Activated CD4-positive, alpha-beta memory T cell treated with anti-CD3 and anti-CD28 coated beads for 36 hours (primary cell): ENCODE measurements at regions of chr2 and their contacts with region 1.

Region 1: GRCh38 chr2:217785544-217786045 is 217.2 kb downstream of the TNS1 start:
- DNase-seq: peak; percentile 85
- H3K4me3 Mint-ChIP-seq: no peak overlapping the region
- H3K27ac Mint-ChIP-seq: no peak overlapping the region
- H3K4me1 Mint-ChIP-seq: peaks cover 21% of the 10 kb centered on the region
- H3K27me3 Mint-ChIP-seq: no peaks in the 10 kb centered on the region

Region 2: DNA sequence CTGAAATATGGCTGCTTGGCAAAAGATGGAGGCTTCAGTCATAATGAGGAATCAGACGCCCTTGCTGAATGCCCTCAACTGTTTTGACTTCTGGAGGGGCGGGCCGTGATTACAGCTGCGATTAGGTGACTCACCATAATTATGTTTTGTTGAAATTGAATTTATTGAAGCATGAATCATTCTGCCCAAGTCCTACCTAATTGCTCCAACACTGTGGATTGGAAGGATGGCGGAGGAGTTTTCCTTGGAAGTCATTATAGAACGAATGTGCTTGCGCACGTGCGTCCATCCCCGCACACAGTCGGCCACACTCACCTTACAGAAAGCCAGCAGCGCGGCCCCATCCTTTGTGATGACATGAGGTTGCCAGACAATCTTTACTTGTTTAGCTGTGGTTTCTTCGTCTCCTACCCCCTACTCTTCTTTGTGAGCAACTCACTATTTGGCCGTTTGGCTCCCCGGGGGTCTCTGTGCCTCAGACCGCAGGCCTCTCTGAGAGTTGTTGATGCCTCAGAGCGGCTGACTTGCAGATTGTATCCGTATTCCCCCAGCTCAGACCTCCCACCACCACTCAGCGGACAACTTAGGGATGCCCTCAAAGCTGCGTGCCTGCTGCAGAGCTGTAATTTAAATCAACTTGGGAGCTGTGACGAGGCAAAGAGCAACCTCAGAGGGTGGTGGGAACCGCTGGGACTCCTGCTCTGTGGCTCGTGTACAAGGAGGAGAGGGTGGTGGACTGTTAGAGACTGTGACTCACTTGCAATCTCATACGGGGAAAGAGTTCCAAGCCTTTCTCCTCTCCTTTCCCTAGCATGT is 296.2 kb before region 1 on chr2:
- CTCF ChIA-PET with region 1: no interaction called
- POLR2A ChIA-PET with region 1: no interaction called
- intact Hi-C with region 1: no loop called
- DNase-seq: no peak
- H3K4me3 Mint-ChIP-seq: no peak overlapping the region
- H3K27ac Mint-ChIP-seq: no peak overlapping the region
- H3K4me1 Mint-ChIP-seq: no peaks in the 10 kb centered on the region
- H3K27me3 Mint-ChIP-seq: no peaks in the 10 kb centered on the region

Region 3: GRCh38 chr2:217521820-217522219 is 263.8 kb before region 1 on chr2:
- CTCF ChIA-PET with region 1: no interaction called
- POLR2A ChIA-PET with region 1: no interaction called
- intact Hi-C with region 1: no loop called
- DNase-seq: no peak
- H3K4me3 Mint-ChIP-seq: no peak overlapping the region
- H3K27ac Mint-ChIP-seq: no peak overlapping the region
- H3K4me1 Mint-ChIP-seq: no peaks in the 10 kb centered on the region
- H3K27me3 Mint-ChIP-seq: no peaks in the 10 kb centered on the region

Region 4: DNA sequence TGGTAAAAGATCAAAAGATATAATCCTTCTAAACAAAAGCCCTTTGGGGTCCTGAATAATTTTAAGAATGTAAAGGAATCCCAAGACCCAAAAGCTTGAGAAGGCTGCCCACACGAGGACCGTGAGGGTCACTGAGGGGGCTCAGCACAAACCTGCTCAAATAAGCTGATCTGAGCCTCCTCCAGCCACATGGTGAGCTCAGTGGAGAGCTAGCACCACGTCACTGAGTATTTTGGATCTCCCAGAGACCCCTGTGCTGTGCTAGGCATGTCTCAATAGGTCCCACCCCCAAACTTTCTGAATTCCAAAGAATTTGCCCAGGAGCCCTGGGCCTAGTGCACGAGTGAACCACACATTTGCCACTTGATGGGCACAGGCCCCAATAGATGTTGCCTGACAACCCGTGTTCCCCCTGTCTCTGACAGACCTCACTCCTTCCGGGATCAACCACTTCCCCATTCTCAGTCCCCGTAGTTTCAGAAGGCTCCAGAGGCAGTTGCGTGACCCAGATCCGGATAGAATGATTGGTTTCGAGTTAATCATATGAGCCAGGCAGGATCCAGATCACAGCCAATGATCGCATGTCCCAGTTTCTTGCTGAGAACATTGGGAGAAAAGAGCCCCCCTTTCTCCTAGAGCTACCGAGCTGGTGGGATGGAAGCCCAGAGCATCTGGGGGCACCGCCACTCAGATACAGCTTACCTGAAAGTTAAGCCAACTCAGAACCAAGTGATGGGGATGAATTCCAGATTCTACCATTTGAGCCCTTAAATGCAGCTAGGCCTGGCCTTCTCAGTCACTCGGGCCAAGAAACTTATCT is 13.4 kb after region 1 on chr2:
- CTCF ChIA-PET with region 1: interaction called, 16 read pairs
- POLR2A ChIA-PET with region 1: no interaction called
- intact Hi-C with region 1: no loop called
- DNase-seq: peak; percentile 3
- H3K4me3 Mint-ChIP-seq: no peak overlapping the region
- H3K27ac Mint-ChIP-seq: no peak overlapping the region
- H3K4me1 Mint-ChIP-seq: no peaks in the 10 kb centered on the region
- H3K27me3 Mint-ChIP-seq: peaks cover 2% of the 10 kb centered on the region

Region 5: DNA sequence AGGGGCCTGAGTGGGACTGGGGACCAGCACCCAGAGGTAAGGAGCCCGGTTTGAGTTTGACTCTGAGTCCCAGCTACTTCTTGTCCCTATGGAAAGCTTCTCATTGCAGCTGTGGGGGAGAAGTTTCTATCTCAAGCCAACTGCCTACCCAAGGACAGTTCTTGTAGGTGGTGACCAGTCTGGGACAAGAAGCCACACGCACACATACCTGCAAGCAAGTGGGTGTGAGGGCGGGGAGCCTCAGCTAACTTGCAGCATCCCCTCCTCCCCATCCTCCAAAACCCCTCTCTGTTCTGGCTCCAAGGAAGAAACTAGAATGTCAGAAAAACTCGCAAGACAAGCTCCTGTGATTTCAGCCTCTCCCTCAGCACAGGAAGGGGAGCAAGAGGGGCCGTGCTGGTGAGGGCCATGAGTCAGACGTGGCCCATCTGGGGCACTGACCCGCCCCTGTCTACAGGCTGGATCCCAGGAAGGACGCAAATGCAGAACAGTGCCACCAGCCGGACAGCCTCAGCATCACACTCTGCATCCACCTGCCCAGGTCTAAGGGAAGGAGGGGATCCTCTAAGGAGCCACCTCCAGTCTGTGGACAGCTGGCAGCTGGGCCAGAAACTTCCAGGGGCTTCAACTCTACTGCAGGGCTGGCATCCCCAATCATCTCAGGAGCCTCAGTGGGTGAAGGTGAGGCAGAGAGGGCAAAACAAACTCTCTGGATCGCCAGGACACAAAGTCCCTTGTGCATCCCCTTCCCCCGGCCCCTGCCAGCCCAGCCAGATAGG is 113.8 kb after region 1 on chr2:
- CTCF ChIA-PET with region 1: interaction called, 11 read pairs
- POLR2A ChIA-PET with region 1: no interaction called
- intact Hi-C with region 1: no loop called
- DNase-seq: peak; percentile 32
- H3K4me3 Mint-ChIP-seq: no peak overlapping the region
- H3K27ac Mint-ChIP-seq: no peak overlapping the region
- H3K4me1 Mint-ChIP-seq: no peaks in the 10 kb centered on the region
- H3K27me3 Mint-ChIP-seq: peaks cover 4% of the 10 kb centered on the region

Region 6: GRCh38 chr2:217977840-217978535 is 192.4 kb after region 1 on chr2:
- CTCF ChIA-PET with region 1: no interaction called
- POLR2A ChIA-PET with region 1: no interaction called
- intact Hi-C with region 1: no loop called
- DNase-seq: no peak
- H3K4me3 Mint-ChIP-seq: no peak overlapping the region
- H3K27ac Mint-ChIP-seq: no peak overlapping the region
- H3K4me1 Mint-ChIP-seq: no peaks in the 10 kb centered on the region
- H3K27me3 Mint-ChIP-seq: peaks cover 5% of the 10 kb centered on the region

Region 7: GRCh38 chr2:217993817-217994463 is 208.3 kb after region 1 on chr2:
- CTCF ChIA-PET with region 1: interaction called, 57 read pairs
- POLR2A ChIA-PET with region 1: no interaction called
- intact Hi-C with region 1: loop called (anchors 1 kb)
- DNase-seq: peak; percentile 68
- H3K4me3 Mint-ChIP-seq: no peak overlapping the region
- H3K27ac Mint-ChIP-seq: no peak overlapping the region
- H3K4me1 Mint-ChIP-seq: no peaks in the 10 kb centered on the region
- H3K27me3 Mint-ChIP-seq: peaks cover 5% of the 10 kb centered on the region

Region 8: DNA sequence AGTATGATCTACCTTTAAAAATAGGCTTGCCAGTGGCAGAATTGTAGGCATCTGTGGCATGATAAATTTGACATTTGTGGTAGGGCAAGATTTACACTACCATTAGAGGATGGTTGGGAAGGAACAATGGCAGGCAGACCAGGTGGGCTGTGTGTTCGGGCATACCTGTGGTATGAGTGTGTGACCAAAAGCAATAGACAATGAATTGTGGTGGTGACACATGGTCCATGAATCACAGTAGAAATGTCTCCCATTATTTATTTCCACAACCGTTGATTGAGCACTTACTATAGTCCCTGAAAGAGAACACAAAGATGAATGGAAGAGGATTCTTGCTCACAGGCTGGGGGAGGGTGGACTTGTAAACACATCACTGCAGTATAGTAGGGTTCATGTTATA is 253.6 kb after region 1 on chr2:
- CTCF ChIA-PET with region 1: interaction called, 13 read pairs
- POLR2A ChIA-PET with region 1: no interaction called
- intact Hi-C with region 1: loop called (anchors 1 kb)
- DNase-seq: no peak
- H3K4me3 Mint-ChIP-seq: no peak overlapping the region
- H3K27ac Mint-ChIP-seq: no peak overlapping the region
- H3K4me1 Mint-ChIP-seq: peaks cover 20% of the 10 kb centered on the region
- H3K27me3 Mint-ChIP-seq: peaks cover 7% of the 10 kb centered on the region

Region 9: DNA sequence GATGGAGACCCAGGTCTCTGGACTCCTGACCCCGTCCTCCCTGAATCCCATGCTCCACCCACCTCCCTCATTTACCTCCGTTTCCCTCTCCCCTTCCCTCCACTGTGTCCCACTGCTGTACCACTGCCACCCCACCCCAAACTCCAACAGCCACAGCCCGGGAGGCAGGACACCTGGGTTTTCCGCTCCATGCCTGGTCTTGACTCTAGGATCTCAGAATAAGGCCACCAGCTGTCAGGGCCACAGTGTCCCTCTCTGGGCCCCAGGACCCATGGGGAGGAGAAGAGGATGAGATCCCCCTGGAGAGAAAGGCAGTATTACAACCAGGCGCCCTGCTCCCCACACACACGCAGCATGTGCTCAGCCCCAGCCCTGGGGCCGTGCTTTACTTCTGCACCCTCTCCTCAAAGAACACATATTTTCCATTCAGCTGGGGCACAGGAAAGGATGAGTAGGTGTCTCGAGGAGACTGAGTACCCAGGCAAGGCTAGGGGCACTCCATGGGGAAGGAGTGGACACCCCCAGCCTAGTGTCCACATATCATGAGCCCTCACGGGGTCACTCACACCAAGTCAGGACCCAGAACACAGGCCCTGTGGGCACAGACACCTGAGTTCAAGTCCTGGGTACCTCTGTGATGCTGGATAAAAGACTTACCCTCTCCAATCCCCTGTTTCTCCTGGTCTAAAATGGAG is 284.2 kb after region 1 on chr2:
- CTCF ChIA-PET with region 1: interaction called, 14 read pairs
- POLR2A ChIA-PET with region 1: no interaction called
- intact Hi-C with region 1: loop called (anchors 1 kb)
- DNase-seq: no peak
- H3K4me3 Mint-ChIP-seq: no peak overlapping the region
- H3K27ac Mint-ChIP-seq: no peak overlapping the region
- H3K4me1 Mint-ChIP-seq: peaks cover 8% of the 10 kb centered on the region
- H3K27me3 Mint-ChIP-seq: peaks cover 21% of the 10 kb centered on the region